ENCODE measurements at regions of chr21 and their contacts with region 1.

Region 1: GRCh38 chr21:45136927-45137611 is 62.7 kb downstream of the ADARB1 start:
- DNase-seq: peak; percentile 88 to 96
- H3K4me3 ChIP-seq: no peak overlapping the region
- CTCF ChIP-seq: peak in 1 of 3 donors; percentile 40
- POLR2A ChIP-seq: no peak

Region 2: DNA sequence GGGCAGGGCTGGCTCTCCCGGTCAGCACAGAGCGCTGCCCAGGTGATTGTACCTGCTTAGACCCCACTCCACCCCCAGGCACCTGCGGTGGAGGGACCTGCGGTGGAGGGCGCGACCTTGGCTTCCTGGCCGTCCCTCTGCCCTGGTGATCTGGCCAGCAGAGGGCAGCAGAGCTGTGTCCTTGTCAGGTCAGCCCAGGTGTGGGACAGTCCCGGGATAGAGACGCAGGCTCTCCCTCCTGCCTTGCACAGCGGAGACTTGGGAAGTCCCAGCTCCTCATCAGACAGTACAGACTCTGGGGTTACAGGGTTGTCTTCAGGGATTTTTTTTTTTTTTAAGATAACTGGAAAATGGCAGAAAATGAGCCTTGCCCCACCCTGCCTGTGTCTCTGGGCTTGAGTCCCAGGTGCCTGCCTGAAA is 187.3 kb before region 1 on chr21:
- intact Hi-C with region 1: loop called (anchors 5 kb)
- DNase-seq: peak; percentile 81 to 97
- H3K4me3 ChIP-seq: no peak overlapping the region
- CTCF ChIP-seq: peak in 1 of 3 donors; percentile 76
- POLR2A ChIP-seq: no peak